Posterior vena cava (tissue), 2 donors: ENCODE measurements at regions of chr7 and their contacts with region 1.

Region 1: DNA sequence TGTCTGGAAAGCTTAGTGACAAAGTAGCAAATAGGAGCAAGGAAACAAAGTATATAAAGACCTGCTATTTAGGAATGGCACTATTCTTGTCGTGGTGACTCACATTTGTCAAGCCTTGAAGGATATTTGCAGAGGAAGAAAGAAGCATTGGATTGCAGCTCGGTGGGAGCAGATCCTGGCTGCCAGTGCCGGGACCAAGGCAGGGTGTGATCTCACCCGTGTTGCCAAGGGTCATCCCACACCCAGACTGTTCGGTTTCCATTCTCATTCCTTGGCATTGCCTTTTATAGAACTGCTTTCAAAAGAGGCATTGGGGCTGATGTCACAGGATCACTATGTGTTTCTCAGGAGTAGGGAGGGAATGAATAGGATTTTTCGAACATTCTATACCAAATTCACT is 176.2 kb downstream of the GALNT17 start:
- DNase-seq: no peak

Region 2: GRCh38 chr7:71132377-71133231 is 175.5 kb before region 1 on chr7:
- intact Hi-C with region 1: no loop called
- DNase-seq: no peak

Region 3: GRCh38 chr7:71220210-71220695 is 87.8 kb before region 1 on chr7:
- intact Hi-C with region 1: loop called in 1 of 2 experiments (anchors 10 kb)
- DNase-seq: no peak

Region 4: GRCh38 chr7:71626206-71626605 is 318.1 kb after region 1 on chr7:
- intact Hi-C with region 1: loop called in 1 of 2 experiments (anchors 10 kb)
- DNase-seq: no peak

Region 5: DNA sequence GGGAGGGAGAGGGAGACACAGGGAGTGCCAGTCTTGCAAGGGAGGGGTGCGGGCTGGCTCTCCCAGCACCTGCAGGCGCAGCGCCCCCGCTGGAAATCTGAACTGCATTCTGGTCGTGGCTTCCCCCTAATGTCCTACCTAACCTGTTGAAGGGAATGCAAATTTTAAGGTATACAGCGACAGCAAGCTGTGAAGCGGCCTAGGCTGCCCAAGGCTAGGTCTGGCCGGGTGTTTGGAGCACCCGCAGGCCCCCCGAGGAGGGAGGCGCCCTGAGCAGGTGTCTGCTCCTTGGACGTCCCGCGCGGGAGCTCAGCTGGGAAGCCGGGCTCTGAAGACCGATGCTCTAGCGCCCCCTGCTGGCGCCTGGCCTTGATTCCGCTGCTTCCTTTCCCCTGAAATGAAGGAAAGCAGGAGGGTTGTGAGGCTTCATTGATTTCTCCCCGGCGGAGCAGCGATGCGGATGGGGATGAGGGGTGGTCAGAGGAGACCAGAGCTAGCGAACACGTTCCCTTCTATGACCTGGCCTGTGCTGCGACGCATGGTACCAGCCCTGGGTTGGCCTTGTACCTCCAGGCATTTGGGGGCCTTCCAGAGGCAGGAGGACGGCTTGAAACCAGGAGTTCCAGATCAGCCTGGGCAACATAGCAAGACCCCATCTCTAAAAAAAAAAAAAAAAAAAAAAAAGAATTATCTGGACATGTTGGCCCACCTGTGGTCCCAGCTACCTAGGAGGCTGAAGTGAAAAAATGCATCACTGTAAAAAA is 425.2 kb after region 1 on chr7:
- intact Hi-C with region 1: loop called in 1 of 2 experiments (anchors 5 kb)
- DNase-seq: peak; percentile 95